ENCODE measurements at regions of chr19 and their contacts with region 1.

Region 1: GRCh38 chr19:1605236-1606137 is at the start of gene UQCR11:
- DNase-seq: peak; percentile 85 to 95 (median 88)
- ATAC-seq: peak; percentile 78 to 85
- H3K4me3 Mint-ChIP-seq: peak within 1 kb of the TSS; percentile 91 to 99 (median 98)
- H3K27ac Mint-ChIP-seq: peak within 1 kb of the TSS; percentile 94 to 100 (median 98)
- H3K4me1 Mint-ChIP-seq: peaks cover 21 to 68% (median 57%) of the 10 kb centered on the region in 4 donors
- H3K27me3 Mint-ChIP-seq: no peaks in the 10 kb centered on the region
- polyA plus RNA-seq, gene UQCR11: 545 to 646 (median 558) TPM

Region 2: DNA sequence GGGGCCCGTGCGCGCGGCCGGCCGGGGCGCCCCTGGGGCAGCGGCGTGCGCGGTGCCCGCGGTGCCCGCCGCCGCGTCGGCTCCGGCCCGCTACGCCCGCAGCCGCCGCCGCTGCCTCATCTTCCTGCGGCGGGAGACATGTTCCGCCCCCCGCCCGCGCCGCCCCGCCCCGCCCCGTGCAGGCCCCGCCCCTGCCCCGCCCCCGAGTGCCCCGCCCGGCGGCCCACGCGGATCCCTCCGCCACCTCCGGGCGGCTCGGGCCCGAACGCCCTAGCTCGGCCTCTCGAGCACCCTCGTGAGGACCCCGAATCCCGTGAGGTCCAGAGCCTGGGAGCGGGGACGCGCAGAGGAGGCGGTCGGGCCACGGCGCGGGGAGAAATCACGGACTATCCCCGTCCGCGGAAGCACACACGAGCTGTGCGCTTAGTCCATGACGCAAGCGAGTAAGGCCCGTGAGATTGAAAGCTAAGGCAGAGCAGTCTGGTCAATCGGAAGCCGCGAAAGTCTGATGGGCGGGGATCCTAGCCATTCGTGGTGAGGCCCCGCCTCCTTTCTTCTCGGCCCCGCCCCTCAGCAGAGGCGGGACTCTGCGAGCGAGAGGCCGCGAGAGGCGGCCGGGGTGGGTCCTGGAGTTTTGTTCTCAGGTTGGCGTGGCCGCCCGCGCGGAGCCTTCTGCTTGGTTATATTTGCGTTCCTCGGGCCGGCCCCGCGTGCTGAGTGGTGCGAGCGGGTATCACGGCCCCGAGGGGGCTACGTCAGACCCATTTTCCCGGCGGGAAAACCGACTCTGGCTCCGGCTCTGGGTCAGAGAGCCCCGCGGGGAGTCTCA is 47.2 kb after region 1 on chr19 and contains the start of gene TCF3:
- POLR2A ChIA-PET with region 1: interaction called, 25 read pairs
- DNase-seq: peak; percentile 96 to 100 (median 98)
- ATAC-seq: peak; percentile 86 to 88
- H3K4me3 Mint-ChIP-seq: peak within 1 kb of the TSS; percentile 87 to 97 (median 92)
- H3K27ac Mint-ChIP-seq: peak within 1 kb of the TSS; percentile 90 to 98 (median 97)
- H3K4me1 Mint-ChIP-seq: peaks cover 12 to 36% (median 15%) of the 10 kb centered on the region in 4 donors
- H3K27me3 Mint-ChIP-seq: no peaks in the 10 kb centered on the region
- polyA plus RNA-seq, gene TCF3: 7.8 to 33.0 (median 13.0) TPM

Measured in naive thymus-derived CD8-positive, alpha-beta T cell (primary cell).